Right cardiac atrium (tissue), 5 donors: ENCODE measurements at regions of chr2 and their contacts with region 1.

Region 1: DNA sequence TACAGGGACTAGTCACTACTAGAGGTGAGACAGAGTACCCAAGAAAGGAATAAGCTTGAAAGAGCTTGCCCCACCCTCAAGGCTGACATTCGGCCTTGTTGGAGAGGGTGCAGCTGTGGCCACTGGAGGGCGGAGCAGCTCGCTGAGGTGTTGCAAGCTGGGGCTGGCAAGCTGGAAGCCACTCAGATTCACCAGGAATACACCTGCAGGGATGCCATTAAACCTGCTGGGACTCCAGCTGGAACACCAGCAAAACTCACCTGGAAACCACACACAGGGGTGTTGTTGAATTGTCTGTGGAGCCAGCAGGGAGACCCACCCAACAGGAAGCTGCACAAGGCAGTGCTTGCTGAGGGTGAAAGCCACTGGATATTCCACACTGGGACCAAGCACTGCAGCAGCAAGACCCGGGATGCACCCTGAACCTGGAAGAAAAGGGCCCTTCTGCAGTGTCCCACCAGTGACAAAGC is 26.1 kb downstream of the KCTD18 start:
- DNase-seq: no peak
- ATAC-seq: peak; percentile 27 to 55
- H3K4me3 ChIP-seq: no peak overlapping the region
- H3K27ac ChIP-seq: no peak overlapping the region
- H3K4me1 ChIP-seq: no peaks in the 10 kb centered on the region
- H3K27me3 ChIP-seq: no peaks in the 10 kb centered on the region

Region 2: GRCh38 chr2:199979832-199980628 is 503.7 kb before region 1 on chr2:
- intact Hi-C with region 1: loop called (anchors 2 to 5 kb)
- DNase-seq: peak; percentile 84 to 96 (median 90)
- ATAC-seq: peak; percentile 78 to 86
- H3K4me3 ChIP-seq: no peak overlapping the region
- H3K27ac ChIP-seq: no peak overlapping the region
- H3K4me1 ChIP-seq: no peaks in the 10 kb centered on the region
- H3K27me3 ChIP-seq: no peaks in the 10 kb centered on the region

Region 3: DNA sequence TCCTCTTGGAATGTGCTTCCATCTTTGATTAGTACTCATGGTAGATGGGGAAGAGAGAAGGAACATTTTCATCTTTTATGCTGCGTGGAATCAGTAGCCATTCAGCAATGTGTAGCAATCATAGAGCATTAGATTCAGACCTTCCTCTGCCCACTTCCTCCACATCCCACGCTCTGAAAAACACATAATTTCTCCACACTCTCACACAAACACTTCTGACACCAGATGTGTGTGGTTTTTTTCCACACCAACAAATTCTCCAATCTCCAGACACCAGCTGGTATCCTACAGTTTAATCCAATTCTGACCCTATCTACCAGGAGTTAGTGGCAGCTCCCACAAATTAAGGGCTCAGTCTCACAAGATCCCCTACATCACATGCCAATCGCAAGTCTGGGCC is 205.4 kb after region 1 on chr2:
- intact Hi-C with region 1: no loop called
- DNase-seq: no peak
- ATAC-seq: no peak
- H3K4me3 ChIP-seq: no peak overlapping the region
- H3K27ac ChIP-seq: no peak overlapping the region
- H3K4me1 ChIP-seq: no peaks in the 10 kb centered on the region
- H3K27me3 ChIP-seq: no peaks in the 10 kb centered on the region

Region 4: GRCh38 chr2:200765139-200765951 is 281.6 kb after region 1 on chr2:
- intact Hi-C with region 1: no loop called
- DNase-seq: peak in 1 of 3 donors; percentile 63
- ATAC-seq: peak; percentile 44 to 58
- H3K4me3 ChIP-seq: no peak overlapping the region
- H3K27ac ChIP-seq: peak overlapping the region; percentile 5
- H3K4me1 ChIP-seq: peaks cover 3% of the 10 kb centered on the region
- H3K27me3 ChIP-seq: no peaks in the 10 kb centered on the region